ENCODE measurements at regions of chr22 and their contacts with region 1.

Region 1: GRCh38 chr22:39960791-39961746 is 872 bp downstream of the TMA7B start:
- DNase-seq: peak; percentile 93
- H3K4me3 ChIP-seq: no peak overlapping the region
- H3K27ac ChIP-seq: peak overlapping the region; percentile 84
- H3K4me1 ChIP-seq: peaks cover 33% of the 10 kb centered on the region
- H3K27me3 ChIP-seq: no peaks in the 10 kb centered on the region
- CTCF ChIP-seq: no peak

Region 2: GRCh38 chr22:39985383-39986035 is 24.4 kb after region 1 on chr22:
- CTCF ChIA-PET with region 1: no interaction called
- dilution Hi-C with region 1: no loop called
- in situ Hi-C with region 1: no loop called
- intact Hi-C with region 1: loop called (anchors 2 kb)
- DNase-seq: peak; percentile 68
- H3K4me3 ChIP-seq: no peak overlapping the region
- H3K27ac ChIP-seq: no peak overlapping the region
- H3K4me1 ChIP-seq: peaks cover 25% of the 10 kb centered on the region
- H3K27me3 ChIP-seq: no peaks in the 10 kb centered on the region
- CTCF ChIP-seq: no peak

Measured in mammary epithelial cell (primary cell).